CD8-positive, alpha-beta memory T cell (primary cell): ENCODE measurements at regions of chr9 and their contacts with region 1.

Region 1: GRCh38 chr9:97900738-97901565 is 21.3 kb downstream of the TRMO start:
- DNase-seq: peak in 2 of 5 donors; percentile 33 to 51
- H3K4me3 ChIP-seq: no peak overlapping the region
- H3K4me3 Mint-ChIP-seq: peak overlapping the region in 1 of 7 donors; percentile 37
- H3K27ac ChIP-seq: no peak overlapping the region
- H3K27ac Mint-ChIP-seq: peak overlapping the region; percentile 57 to 97 (median 85)
- H3K4me1 ChIP-seq: peaks cover 56% of the 10 kb centered on the region
- H3K4me1 Mint-ChIP-seq: peaks cover 46 to 60% (median 53%) of the 10 kb centered on the region in 3 donors
- H3K27me3 ChIP-seq: no peaks in the 10 kb centered on the region
- H3K27me3 Mint-ChIP-seq: no peaks in the 10 kb centered on the region

Region 2: GRCh38 chr9:97651646-97652045 is 249.3 kb before region 1 on chr9:
- CTCF ChIA-PET with region 1: no interaction called
- POLR2A ChIA-PET with region 1: no interaction called
- DNase-seq: no peak
- H3K4me3 ChIP-seq: no peak overlapping the region
- H3K4me3 Mint-ChIP-seq: no peak overlapping the region
- H3K27ac ChIP-seq: no peak overlapping the region
- H3K27ac Mint-ChIP-seq: no peak overlapping the region
- H3K4me1 ChIP-seq: no peaks in the 10 kb centered on the region
- H3K4me1 Mint-ChIP-seq: peaks cover 0 to 8% (median 7%) of the 10 kb centered on the region in 3 donors
- H3K27me3 ChIP-seq: no peaks in the 10 kb centered on the region
- H3K27me3 Mint-ChIP-seq: no peaks in the 10 kb centered on the region

Region 3: GRCh38 chr9:97890038-97890437 is 10.9 kb before region 1 on chr9:
- CTCF ChIA-PET with region 1: interaction called, 87 read pairs
- POLR2A ChIA-PET with region 1: interaction called, 3 read pairs
- DNase-seq: peak; percentile 31 to 73 (median 48)
- H3K4me3 ChIP-seq: no peak overlapping the region
- H3K4me3 Mint-ChIP-seq: no peak overlapping the region
- H3K27ac ChIP-seq: no peak overlapping the region
- H3K27ac Mint-ChIP-seq: peak overlapping the region in 3 of 8 donors; percentile 32 to 75 (median 42)
- H3K4me1 ChIP-seq: peaks cover 9% of the 10 kb centered on the region
- H3K4me1 Mint-ChIP-seq: peaks cover 3 to 7% (median 6%) of the 10 kb centered on the region in 3 donors
- H3K27me3 ChIP-seq: no peaks in the 10 kb centered on the region
- H3K27me3 Mint-ChIP-seq: no peaks in the 10 kb centered on the region

Region 4: DNA sequence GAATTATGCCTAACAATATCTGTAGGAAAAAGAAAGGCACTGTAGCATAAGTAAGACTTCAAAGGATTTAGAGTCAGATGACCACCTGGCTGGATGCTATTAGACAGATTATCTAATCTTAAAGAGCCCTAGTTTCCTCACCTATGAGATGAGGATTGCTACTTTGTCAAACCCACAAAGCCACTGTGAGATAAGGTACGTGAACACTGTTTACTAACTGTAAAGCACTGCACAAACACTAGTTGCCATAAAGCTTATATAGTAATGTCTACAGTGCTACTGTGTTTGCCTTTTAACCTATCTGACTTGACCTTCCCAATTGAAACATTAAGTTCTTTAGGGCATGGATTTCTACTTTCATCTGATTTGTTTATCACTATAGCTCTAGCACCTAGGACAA is 11.0 kb after region 1 on chr9:
- CTCF ChIA-PET with region 1: interaction called, 14 read pairs
- POLR2A ChIA-PET with region 1: interaction called, 5 read pairs
- DNase-seq: no peak
- H3K4me3 ChIP-seq: no peak overlapping the region
- H3K4me3 Mint-ChIP-seq: peak overlapping the region in 3 of 7 donors; percentile 21 to 27 (median 22)
- H3K27ac ChIP-seq: no peak overlapping the region
- H3K27ac Mint-ChIP-seq: peak overlapping the region; percentile 76 to 95 (median 91)
- H3K4me1 ChIP-seq: peaks cover 57% of the 10 kb centered on the region
- H3K4me1 Mint-ChIP-seq: peaks cover 73 to 91% (median 89%) of the 10 kb centered on the region in 3 donors
- H3K27me3 ChIP-seq: no peaks in the 10 kb centered on the region
- H3K27me3 Mint-ChIP-seq: no peaks in the 10 kb centered on the region